ENCODE measurements at regions of chr12 and their contacts with region 1.

Region 1: GRCh38 chr12:12032851-12033588 is 37.7 kb upstream of the BCL2L14 start:
- DNase-seq: peak; percentile 12
- H3K4me3 ChIP-seq: peak overlapping the region; percentile 3 to 64 (median 42)
- H3K27ac ChIP-seq: peak overlapping the region; percentile 36 to 77 (median 74)
- H3K4me1 ChIP-seq: peaks cover 11 to 23% (median 11%) of the 10 kb centered on the region in 3 donors
- H3K27me3 ChIP-seq: no peaks in the 10 kb centered on the region
- CTCF ChIP-seq: peak; percentile 76 to 92 (median 89)
- POLR2A ChIP-seq: no peak

Region 2: DNA sequence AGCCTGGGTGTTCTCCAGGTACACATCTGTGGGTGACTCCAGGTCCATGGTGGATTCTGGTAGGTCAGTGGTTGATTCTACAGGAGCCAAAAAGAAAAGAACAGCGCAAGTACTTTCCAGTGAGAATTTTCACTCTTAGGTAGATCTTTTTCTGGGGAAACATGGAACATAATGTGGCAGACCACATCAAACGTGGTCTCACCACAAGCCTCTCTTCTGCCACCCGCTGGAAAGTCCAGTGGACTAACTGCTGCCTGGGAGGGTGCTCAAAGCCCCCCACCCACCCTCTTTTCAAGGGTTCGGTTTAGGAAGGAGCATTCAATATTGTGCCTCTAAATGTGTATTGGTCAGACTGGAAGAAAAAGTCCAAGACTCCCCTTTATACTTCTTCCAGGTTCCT is 601.5 kb before region 1 on chr12:
- intact Hi-C with region 1: no loop called
- DNase-seq: no peak
- H3K4me3 ChIP-seq: no peak overlapping the region
- H3K27ac ChIP-seq: no peak overlapping the region
- H3K4me1 ChIP-seq: no peaks in the 10 kb centered on the region
- H3K27me3 ChIP-seq: no peaks in the 10 kb centered on the region
- CTCF ChIP-seq: no peak
- POLR2A ChIP-seq: no peak

Region 3: GRCh38 chr12:11553871-11554533 is 479.0 kb before region 1 on chr12:
- intact Hi-C with region 1: loop called (anchors 10 kb)
- DNase-seq: no peak
- H3K4me3 ChIP-seq: no peak overlapping the region
- H3K27ac ChIP-seq: no peak overlapping the region
- H3K4me1 ChIP-seq: peaks cover 0 to 30% (median 9%) of the 10 kb centered on the region in 3 donors
- H3K27me3 ChIP-seq: no peaks in the 10 kb centered on the region
- CTCF ChIP-seq: peak; percentile 48 to 68 (median 58)
- POLR2A ChIP-seq: no peak

Region 4: GRCh38 chr12:11581179-11581755 is 451.8 kb before region 1 on chr12:
- intact Hi-C with region 1: loop called (anchors 5 kb)
- DNase-seq: no peak
- H3K4me3 ChIP-seq: no peak overlapping the region
- H3K27ac ChIP-seq: peak overlapping the region in 3 of 4 donors; percentile 61 to 83 (median 77)
- H3K4me1 ChIP-seq: peaks cover 19 to 52% (median 26%) of the 10 kb centered on the region in 3 donors
- H3K27me3 ChIP-seq: no peaks in the 10 kb centered on the region
- CTCF ChIP-seq: peak; percentile 40 to 73 (median 66)
- POLR2A ChIP-seq: no peak

Region 5: DNA sequence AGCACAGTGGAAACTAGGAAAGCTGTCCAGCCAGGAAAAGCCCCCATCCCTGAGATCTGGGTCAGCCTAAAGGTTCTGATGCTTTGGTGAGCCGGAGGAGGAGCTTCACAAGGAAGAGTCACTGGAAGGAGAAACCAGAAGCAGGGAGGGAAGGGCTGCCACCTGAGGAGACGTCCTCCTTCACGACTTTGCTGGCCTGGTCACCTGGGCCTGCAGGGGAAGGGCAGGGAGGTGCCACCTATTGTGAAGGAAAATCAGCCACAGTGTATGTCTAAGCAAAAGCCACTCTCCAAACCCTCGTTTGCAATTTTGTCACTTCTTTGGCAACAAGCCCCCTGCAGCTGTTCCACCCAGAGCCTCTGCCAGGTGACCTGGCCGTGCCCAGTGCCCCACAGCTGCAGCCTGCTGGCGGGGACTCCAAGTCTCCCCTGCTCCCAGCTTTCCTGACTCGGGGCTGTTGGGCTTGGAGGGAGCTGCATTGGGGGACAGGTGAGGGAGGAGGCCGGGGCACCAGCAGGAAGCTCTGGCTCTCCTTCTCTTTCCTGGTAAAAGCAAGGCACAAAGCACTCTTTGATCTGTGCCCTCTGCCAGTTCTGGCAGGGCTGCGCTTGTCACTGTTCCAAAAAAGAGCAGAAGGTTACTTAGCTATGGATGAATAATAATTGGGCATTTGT is 83.1 kb before region 1 on chr12:
- intact Hi-C with region 1: no loop called
- DNase-seq: no peak
- H3K4me3 ChIP-seq: no peak overlapping the region
- H3K27ac ChIP-seq: peak overlapping the region in 1 of 4 donors; percentile 29
- H3K4me1 ChIP-seq: peaks cover 8 to 31% (median 11%) of the 10 kb centered on the region in 3 donors
- H3K27me3 ChIP-seq: no peaks in the 10 kb centered on the region
- CTCF ChIP-seq: no peak
- POLR2A ChIP-seq: no peak